ENCODE measurements at regions of chr10 and their contacts with region 1.

Region 1: DNA sequence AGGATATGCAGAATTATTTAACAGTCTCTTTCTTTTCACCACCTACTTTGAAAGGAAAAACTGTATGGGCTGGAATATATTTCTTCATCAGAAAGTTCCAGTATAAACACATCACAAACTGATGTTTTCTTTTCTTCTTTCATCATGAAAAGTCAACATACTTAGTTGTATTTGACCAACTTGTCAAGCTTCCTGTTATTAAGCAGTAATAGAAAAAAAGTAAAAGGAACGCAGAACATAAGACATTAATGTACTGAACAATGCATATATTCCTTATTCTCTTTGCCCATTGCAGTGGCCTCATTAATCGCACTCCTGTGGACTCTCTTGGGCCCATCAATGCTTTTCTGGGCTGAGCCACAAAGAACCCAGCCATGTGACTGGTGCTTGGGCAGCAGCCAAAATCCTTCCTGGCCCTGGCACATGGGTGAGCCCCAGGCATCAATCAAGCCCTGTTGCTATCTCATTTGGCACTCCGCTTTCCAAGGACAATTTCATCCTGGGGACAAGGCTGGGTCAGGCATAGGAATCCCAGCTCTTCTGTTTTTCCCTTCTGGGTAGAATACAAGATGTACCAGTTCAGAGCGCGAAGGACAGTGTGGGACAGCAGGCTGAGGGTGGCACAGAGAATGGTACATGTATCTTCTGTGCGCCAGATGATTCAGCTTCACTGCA is 42.3 kb downstream of the RHOBTB1 start:
- DNase-seq: peak in 1 of 2 donors; percentile 49
- H3K4me3 ChIP-seq: no peak overlapping the region
- H3K27ac ChIP-seq: peak overlapping the region in 4 of 5 donors; percentile 13 to 54 (median 45)
- H3K4me1 ChIP-seq: peaks cover 0 to 34% (median 20%) of the 10 kb centered on the region in 4 donors
- H3K27me3 ChIP-seq: no peaks in the 10 kb centered on the region
- CTCF ChIP-seq: no peak
- EP300 ChIP-seq: no peak
- POLR2A ChIP-seq: no peak

Region 2: DNA sequence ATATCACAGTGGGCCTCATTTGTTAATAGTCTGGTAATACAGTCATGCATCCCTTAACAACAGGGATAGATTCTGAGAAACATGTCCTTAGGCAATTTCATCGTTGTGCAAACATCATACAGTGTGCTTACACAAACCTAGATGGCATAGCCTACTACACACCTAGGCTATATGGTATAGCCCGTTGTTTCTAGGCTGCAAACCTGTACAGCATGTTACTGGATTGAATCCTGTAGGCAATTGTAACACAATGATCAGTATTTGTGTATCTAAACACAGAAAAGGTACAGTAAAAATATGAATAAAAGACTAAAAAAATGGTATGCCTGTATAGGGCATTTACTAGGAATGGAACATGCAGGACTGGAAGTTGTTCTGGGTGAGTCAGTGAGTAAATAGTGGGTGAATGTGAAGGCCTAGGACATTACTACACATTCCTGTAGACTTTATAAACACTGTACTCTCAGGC is 54.3 kb after region 1 on chr10:
- intact Hi-C with region 1: loop called (anchors 10 kb)
- DNase-seq: peak in 1 of 2 donors; percentile 60
- H3K4me3 ChIP-seq: no peak overlapping the region
- H3K27ac ChIP-seq: peak overlapping the region in 2 of 5 donors; percentile 65
- H3K4me1 ChIP-seq: peaks cover 3 to 32% (median 21%) of the 10 kb centered on the region in 4 donors
- H3K27me3 ChIP-seq: no peaks in the 10 kb centered on the region
- CTCF ChIP-seq: no peak
- EP300 ChIP-seq: no peak
- POLR2A ChIP-seq: no peak